ENCODE measurements at regions of chr9 and their contacts with region 1.

Region 1: DNA sequence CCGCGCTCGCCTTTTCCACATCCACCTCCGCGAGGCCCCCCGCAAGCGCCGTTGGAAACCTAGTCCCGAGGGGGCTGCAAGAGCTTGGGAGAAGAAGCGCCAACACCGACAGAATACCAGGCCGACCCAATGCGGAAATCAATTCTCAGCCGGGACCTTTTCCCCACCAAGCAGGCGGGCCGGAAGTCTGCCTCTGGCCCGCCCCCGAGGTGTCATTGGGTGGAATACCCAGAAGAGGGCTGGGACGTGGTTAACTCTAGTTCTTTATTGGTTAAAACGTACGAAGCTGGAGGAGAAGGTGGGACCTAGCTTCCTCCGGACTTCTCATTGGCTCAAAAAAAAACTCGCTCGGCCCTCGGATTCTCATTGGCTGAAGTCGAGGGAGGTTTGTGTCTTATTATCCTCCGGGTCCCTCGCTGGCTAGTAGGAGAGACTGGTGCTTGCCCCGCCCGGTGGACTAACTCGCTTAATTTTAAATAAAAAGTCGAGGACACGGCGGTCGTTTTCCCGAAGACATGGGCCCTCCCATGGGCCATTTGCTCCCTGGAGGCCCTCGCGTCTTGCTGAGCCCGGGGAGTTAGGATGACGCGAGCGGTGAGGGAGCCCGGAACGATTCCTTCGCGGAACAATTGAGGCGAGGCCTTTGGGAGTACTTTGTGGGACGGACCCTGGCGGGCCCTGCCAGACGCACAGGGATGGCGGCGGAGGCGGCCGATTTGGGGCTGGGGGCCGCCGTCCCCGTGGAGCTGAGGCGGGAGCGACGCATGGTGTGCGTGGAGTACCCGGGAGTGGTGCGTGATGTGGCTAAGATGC is at the start of gene GTF3C5:
- DNase-seq: peak; percentile 94
- H3K4me3 Mint-ChIP-seq: peak within 1 kb of the TSS; percentile 85
- H3K27ac Mint-ChIP-seq: peak within 1 kb of the TSS; percentile 90
- H3K4me1 Mint-ChIP-seq: peaks cover 46% of the 10 kb centered on the region
- H3K27me3 Mint-ChIP-seq: no peaks in the 10 kb centered on the region
- total RNA-seq, gene GTF3C5: 66.8 to 67.3 TPM

Region 2: GRCh38 chr9:132717326-132717945 is 313.1 kb before region 1 on chr9:
- CTCF ChIA-PET with region 1: no interaction called
- POLR2A ChIA-PET with region 1: no interaction called
- DNase-seq: no peak
- H3K4me3 Mint-ChIP-seq: no peak overlapping the region
- H3K27ac Mint-ChIP-seq: no peak overlapping the region
- H3K4me1 Mint-ChIP-seq: no peaks in the 10 kb centered on the region
- H3K27me3 Mint-ChIP-seq: peaks cover 21% of the 10 kb centered on the region

Region 3: DNA sequence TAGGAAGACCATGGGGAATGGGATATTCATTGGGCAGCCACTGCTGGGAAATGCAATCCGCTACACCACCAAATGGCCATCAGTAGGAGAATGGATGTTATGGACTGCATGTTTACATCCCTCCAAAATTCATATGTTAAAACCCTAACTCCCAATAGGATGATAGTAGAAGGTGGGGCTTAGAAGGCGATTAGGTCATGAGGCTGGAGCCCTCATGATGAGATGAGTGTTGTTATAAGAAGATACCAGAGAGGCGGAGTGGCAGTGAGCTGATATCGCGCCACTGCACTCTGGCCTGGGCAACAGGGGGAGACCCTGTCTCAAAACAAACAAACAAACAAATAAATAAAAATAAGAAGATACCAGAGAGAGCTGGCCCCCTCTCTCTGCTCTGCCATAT is 15.8 kb before region 1 on chr9:
- CTCF ChIA-PET with region 1: no interaction called
- POLR2A ChIA-PET with region 1: no interaction called
- DNase-seq: no peak
- H3K4me3 Mint-ChIP-seq: no peak overlapping the region
- H3K27ac Mint-ChIP-seq: no peak overlapping the region
- H3K4me1 Mint-ChIP-seq: no peaks in the 10 kb centered on the region
- H3K27me3 Mint-ChIP-seq: peaks cover 28% of the 10 kb centered on the region

Region 4: GRCh38 chr9:133060417-133060841 is 29.9 kb after region 1 on chr9:
- CTCF ChIA-PET with region 1: interaction called, 3 read pairs
- POLR2A ChIA-PET with region 1: interaction called, 11 read pairs
- DNase-seq: no peak
- H3K4me3 Mint-ChIP-seq: no peak overlapping the region
- H3K27ac Mint-ChIP-seq: peak overlapping the region; percentile 81
- H3K4me1 Mint-ChIP-seq: peaks cover 50% of the 10 kb centered on the region
- H3K27me3 Mint-ChIP-seq: no peaks in the 10 kb centered on the region

Region 5: GRCh38 chr9:133115448-133116345 is 85.2 kb after region 1 on chr9:
- CTCF ChIA-PET with region 1: no interaction called
- POLR2A ChIA-PET with region 1: interaction called, 12 read pairs
- DNase-seq: peak; percentile 79
- H3K4me3 Mint-ChIP-seq: peak overlapping the region; percentile 35
- H3K27ac Mint-ChIP-seq: peak overlapping the region; percentile 87
- H3K4me1 Mint-ChIP-seq: peaks cover 83% of the 10 kb centered on the region
- H3K27me3 Mint-ChIP-seq: no peaks in the 10 kb centered on the region

Region 6: DNA sequence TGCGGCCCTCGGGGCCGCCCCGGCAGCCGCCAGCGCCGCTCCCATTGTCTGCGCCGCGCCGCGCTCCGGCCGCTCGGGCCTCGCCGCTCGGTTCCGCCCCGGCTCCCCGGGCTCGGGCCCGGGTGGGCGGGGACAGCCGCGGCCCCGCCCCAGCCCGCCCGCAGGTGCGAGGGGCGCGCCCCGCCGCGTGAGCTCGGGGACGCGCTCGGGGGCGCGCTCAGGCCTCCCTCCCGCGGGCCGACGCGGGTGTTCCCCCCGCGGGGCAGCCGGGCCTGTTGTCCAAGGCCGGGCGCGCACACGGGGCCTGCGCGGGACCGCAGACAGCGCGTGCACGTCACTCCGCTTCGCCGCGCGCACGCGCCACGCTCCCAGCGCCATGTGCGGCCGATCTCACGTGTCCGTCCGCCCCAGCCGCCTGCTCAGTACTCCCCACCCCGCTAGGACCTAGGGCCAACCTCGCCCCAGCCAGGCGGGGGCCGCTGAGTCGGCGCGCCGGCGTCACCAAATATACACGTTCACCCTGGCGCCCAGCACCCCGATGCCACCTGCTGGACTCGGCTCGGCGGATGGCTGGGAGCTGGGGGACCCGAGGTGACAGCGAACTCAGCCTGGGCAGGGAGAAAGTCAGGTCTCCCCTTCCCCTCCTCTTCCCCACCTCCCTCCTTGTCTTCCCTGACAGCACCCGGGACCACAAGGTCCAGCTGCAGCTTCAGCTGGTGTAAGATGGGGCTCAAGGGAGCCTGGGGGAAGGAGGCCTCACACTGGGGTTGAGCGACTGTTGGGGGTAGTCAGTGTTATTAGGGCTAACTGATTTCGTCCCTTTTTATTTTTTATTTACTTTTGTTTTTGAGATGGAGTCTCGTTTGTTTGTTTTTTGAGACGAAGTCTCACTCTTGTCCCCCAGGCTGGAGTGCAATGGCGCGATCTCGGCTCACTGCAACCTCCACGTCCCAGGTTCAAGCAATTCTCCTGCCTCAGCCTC is 118.9 kb after region 1 on chr9:
- CTCF ChIA-PET with region 1: interaction called, 29 read pairs
- POLR2A ChIA-PET with region 1: interaction called, 23 read pairs
- DNase-seq: peak; percentile 83
- H3K4me3 Mint-ChIP-seq: peak overlapping the region; percentile 69
- H3K27ac Mint-ChIP-seq: peak overlapping the region; percentile 58
- H3K4me1 Mint-ChIP-seq: peaks cover 38% of the 10 kb centered on the region
- H3K27me3 Mint-ChIP-seq: no peaks in the 10 kb centered on the region

Region 7: GRCh38 chr9:133275105-133276000 is 244.8 kb after region 1 on chr9 and contains the start of gene ABO:
- CTCF ChIA-PET with region 1: no interaction called
- POLR2A ChIA-PET with region 1: no interaction called
- DNase-seq: no peak
- H3K4me3 Mint-ChIP-seq: no peak within 1 kb of the TSS
- H3K27ac Mint-ChIP-seq: no peak within 1 kb of the TSS
- H3K4me1 Mint-ChIP-seq: peaks cover 5% of the 10 kb centered on the region
- H3K27me3 Mint-ChIP-seq: peaks cover 46% of the 10 kb centered on the region
- total RNA-seq, gene ABO: 0.20 to 0.53 TPM

Region 8: DNA sequence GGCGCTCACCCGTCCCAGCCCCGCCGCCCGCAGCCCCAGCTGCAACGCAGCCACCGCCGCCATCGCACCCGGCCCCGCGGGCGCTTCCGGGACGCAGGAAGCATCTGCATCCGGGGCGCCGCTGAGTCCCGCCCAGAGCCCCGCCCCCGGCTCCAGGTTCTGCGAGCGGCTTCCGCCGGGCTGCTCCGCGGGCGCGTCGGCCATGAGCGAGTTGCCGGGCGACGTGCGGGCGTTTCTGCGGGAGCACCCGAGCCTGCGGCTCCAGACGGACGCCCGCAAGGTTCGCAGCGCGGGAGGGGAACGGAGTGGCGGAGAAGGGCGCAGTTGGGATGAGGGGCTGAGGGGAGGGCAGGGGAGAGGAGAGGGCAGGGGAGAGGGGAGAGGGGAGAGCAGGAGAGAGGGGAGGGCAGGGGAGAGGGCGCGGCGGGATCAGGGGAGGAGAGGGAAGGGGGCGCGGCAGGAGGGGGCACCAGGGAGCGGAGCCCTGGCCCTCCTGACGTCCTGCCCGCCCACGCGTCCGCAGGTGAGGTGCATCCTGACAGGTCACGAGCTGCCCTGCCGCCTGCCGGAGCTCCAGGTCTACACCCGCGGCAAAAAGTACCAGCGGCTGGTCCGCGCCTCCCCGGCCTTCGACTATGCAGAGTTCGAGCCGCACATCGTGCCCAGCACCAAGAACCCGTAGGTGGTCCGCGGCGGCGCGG is 326.0 kb after region 1 on chr9 and contains the starts of genes SURF1 and SURF2:
- CTCF ChIA-PET with region 1: no interaction called
- POLR2A ChIA-PET with region 1: no interaction called
- DNase-seq: peak; percentile 93
- H3K4me3 Mint-ChIP-seq: peak within 1 kb of the TSS; percentile 85
- H3K27ac Mint-ChIP-seq: peak within 1 kb of the TSS; percentile 83
- H3K4me1 Mint-ChIP-seq: peaks cover 53% of the 10 kb centered on the region
- H3K27me3 Mint-ChIP-seq: no peaks in the 10 kb centered on the region
- total RNA-seq, gene SURF1: 33.8 to 37.6 TPM
- total RNA-seq, gene SURF2: 10.2 TPM

Region 9: GRCh38 chr9:133375724-133376654 is 345.5 kb after region 1 on chr9 and contains the starts of genes STKLD1 and SURF4:
- CTCF ChIA-PET with region 1: interaction called, 3 read pairs
- POLR2A ChIA-PET with region 1: interaction called, 12 read pairs
- DNase-seq: peak; percentile 96
- H3K4me3 Mint-ChIP-seq: peak within 1 kb of the TSS; percentile 83
- H3K27ac Mint-ChIP-seq: peak within 1 kb of the TSS; percentile 97
- H3K4me1 Mint-ChIP-seq: peaks cover 36% of the 10 kb centered on the region
- H3K27me3 Mint-ChIP-seq: peaks cover 2% of the 10 kb centered on the region
- total RNA-seq, gene STKLD1: 0.65 to 0.71 TPM
- total RNA-seq, gene SURF4: 249 to 260 TPM

Measured in activated CD4-positive, alpha-beta memory T cell treated with anti-CD3 and anti-CD28 coated beads, Interleukin-2, amount 10 ng/mL, durations not matched to agents 7 days and 5 days (primary cell).